ENCODE measurements at regions of chr12 and their contacts with region 1.

Region 1: GRCh38 chr12:113048716-113049127 is 7.8 kb upstream of the DTX1 start:
- DNase-seq: peak; percentile 83
- H3K4me3 Mint-ChIP-seq: no peak overlapping the region
- H3K27ac Mint-ChIP-seq: no peak overlapping the region
- H3K4me1 Mint-ChIP-seq: peaks cover 13% of the 10 kb centered on the region
- H3K27me3 Mint-ChIP-seq: no peaks in the 10 kb centered on the region

Region 2: GRCh38 chr12:113092607-113093408 is 44.1 kb after region 1 on chr12:
- CTCF ChIA-PET with region 1: interaction called, 84 read pairs
- intact Hi-C with region 1: loop called (anchors 1 kb)
- DNase-seq: peak; percentile 30
- H3K4me3 Mint-ChIP-seq: no peak overlapping the region
- H3K27ac Mint-ChIP-seq: no peak overlapping the region
- H3K4me1 Mint-ChIP-seq: peaks cover 53% of the 10 kb centered on the region
- H3K27me3 Mint-ChIP-seq: no peaks in the 10 kb centered on the region

Region 3: GRCh38 chr12:113135178-113136127 is 86.7 kb after region 1 on chr12 and contains the start of gene RASAL1:
- CTCF ChIA-PET with region 1: interaction called, 11 read pairs
- intact Hi-C with region 1: no loop called
- DNase-seq: peak; percentile 90
- H3K4me3 Mint-ChIP-seq: peak within 1 kb of the TSS; percentile 70
- H3K27ac Mint-ChIP-seq: peak within 1 kb of the TSS; percentile 73
- H3K4me1 Mint-ChIP-seq: peaks cover 18% of the 10 kb centered on the region
- H3K27me3 Mint-ChIP-seq: no peaks in the 10 kb centered on the region
- total RNA-seq, gene RASAL1: 2.6 to 3.2 TPM

Region 4: DNA sequence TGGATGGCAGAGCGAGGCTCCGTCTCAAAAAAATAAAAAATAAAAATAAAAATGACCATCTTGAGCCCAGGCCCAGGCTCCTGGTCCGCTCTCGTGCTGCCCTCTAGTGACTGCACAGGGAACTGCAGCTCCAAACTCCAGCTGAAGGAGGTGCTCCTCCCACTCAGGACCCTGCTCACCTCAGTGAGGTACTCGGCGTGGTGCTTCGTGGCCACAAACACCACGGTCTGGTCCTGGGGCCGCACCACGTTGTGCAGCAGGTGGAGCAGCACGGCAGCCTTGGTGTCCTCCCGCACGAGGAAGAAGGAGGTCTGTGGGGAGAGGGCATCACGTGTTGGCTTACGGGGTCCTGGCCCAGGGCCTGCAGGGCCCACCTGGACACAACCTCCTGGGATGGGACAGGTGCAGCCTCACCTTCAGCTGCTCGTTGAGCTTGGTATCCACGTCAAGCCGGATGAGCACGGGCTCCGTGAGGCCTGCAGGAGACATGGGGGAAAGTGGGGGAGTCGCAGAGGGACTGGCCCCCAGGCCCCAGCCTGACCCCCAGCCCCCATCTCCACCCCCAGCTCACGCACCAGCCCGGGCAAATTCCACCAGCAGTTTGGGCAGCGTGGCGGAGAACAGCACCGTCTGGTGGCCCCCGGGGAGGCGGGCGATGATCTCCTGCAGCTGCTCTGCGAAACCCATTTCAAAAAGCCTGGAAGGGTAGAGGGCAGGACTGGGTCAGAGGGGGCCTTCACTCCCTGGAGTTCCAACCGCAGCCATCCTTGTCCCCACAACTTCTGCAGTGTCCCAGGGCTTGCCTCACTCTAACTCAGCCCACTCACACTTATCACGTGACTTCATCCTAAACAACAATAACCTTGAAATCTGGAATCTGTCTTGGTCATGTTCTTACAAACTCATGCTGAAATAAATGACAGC is 126.0 kb after region 1 on chr12:
- CTCF ChIA-PET with region 1: interaction called, 29 read pairs
- intact Hi-C with region 1: loop called (anchors 1 kb)
- DNase-seq: peak; percentile 86
- H3K4me3 Mint-ChIP-seq: no peak overlapping the region
- H3K27ac Mint-ChIP-seq: no peak overlapping the region
- H3K4me1 Mint-ChIP-seq: no peaks in the 10 kb centered on the region
- H3K27me3 Mint-ChIP-seq: no peaks in the 10 kb centered on the region

Measured in activated naive CD4-positive, alpha-beta T cell treated with anti-CD3 and anti-CD28 coated beads for 36 hours (primary cell).